Right ventricle myocardium inferior (tissue), 1 donor: ENCODE measurements at regions of chr11 and their contacts with region 1.

Region 1: DNA sequence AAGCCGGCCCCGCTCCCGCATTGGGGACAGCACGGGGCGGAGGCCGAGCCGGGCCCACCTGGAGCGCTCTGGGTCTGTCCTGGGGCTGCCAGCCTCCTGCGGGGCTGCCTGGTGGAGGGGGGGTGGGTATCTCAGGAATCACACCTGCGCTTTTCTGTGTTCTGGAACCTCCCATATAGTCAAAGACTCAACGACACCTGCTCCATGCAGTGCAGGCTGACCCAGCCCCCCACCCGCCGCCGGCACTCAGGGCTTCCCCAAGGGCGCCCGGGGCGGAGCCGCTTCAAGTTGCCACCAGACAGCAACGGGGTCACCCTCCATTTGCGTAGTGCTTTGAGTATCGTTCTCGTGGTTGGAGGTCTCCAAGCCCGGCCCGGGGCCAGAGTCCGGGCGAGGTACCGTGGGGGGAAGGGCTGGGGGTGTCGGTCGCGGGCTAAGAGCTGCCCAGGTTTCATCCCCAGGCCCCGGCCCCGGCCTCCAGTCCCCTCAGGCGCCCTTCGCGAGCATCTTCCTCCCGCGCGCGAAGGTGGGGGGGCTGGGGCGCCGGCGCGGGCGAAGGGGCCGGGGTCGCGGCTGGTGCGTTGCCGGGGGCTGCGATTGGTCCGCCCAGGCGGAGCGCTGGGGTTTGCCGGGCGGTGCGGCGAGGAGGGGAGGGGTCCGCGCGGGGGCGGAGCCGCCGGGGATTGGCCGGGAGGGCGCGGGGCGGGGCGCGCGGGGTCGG is 6.6 kb downstream of the TSPAN4 start:
- DNase-seq: no peak
- ATAC-seq: no peak

Region 2: GRCh38 chr11:870127-870413 is 20.8 kb after region 1 on chr11:
- intact Hi-C with region 1: no loop called
- DNase-seq: no peak
- ATAC-seq: no peak

Region 3: GRCh38 chr11:1050581-1051355 is 201.5 kb after region 1 on chr11:
- intact Hi-C with region 1: loop called (anchors 1 kb)
- DNase-seq: peak; percentile 78
- ATAC-seq: peak; percentile 85